Ascending aorta (tissue), 2 donors: ENCODE measurements at regions of chr12 and their contacts with region 1.

Region 1: DNA sequence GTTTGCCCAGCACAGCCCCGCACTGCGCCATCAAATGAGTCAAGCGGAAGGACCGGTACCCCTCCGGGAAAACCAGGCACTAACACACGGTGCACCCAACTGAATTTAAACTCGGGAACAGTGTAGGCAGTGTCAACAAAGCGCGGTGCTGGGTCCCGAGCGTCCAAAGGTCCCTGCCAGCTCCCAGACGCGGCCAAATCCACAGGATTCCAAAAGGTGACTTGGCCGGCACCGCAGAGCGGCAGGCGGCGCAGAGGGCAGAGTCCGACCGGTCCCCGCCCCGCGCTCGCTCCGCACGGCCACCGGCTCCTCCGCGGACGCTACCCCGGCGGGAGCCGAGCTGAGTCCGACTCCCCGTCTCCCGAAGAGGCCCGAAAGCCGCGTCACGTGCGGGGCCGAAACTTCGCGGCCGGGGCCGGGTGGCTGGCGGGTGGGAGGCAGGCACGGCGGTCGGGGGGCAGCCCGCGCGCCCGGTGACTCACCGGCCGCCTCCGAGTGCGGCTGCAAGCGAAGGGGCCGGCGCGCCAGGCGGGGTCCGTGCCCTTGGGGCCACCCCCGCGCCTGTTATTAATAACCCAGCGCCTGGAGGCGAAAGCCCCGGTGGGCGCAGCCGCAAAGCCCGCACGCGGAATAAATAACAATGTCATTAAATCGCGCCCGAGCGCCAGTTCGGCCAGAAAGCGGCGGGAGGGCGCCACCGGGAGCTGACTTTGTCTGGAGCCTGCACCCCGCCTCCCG is 863 bp downstream of the DENND5B start:
- DNase-seq: peak; percentile 42 to 91
- H3K4me3 ChIP-seq: peak overlapping the region; percentile 78 to 95
- H3K27ac ChIP-seq: peak overlapping the region; percentile 95 to 96
- H3K4me1 ChIP-seq: peaks cover 0 to 11% of the 10 kb centered on the region in 2 donors
- H3K27me3 ChIP-seq: no peaks in the 10 kb centered on the region
- CTCF ChIP-seq: no peak

Region 2: GRCh38 chr12:30378307-30378706 is 1211.8 kb before region 1 on chr12:
- intact Hi-C with region 1: no loop called
- DNase-seq: no peak
- H3K4me3 ChIP-seq: no peak overlapping the region
- H3K27ac ChIP-seq: no peak overlapping the region
- H3K4me1 ChIP-seq: no peaks in the 10 kb centered on the region
- H3K27me3 ChIP-seq: no peaks in the 10 kb centered on the region
- CTCF ChIP-seq: no peak

Region 3: DNA sequence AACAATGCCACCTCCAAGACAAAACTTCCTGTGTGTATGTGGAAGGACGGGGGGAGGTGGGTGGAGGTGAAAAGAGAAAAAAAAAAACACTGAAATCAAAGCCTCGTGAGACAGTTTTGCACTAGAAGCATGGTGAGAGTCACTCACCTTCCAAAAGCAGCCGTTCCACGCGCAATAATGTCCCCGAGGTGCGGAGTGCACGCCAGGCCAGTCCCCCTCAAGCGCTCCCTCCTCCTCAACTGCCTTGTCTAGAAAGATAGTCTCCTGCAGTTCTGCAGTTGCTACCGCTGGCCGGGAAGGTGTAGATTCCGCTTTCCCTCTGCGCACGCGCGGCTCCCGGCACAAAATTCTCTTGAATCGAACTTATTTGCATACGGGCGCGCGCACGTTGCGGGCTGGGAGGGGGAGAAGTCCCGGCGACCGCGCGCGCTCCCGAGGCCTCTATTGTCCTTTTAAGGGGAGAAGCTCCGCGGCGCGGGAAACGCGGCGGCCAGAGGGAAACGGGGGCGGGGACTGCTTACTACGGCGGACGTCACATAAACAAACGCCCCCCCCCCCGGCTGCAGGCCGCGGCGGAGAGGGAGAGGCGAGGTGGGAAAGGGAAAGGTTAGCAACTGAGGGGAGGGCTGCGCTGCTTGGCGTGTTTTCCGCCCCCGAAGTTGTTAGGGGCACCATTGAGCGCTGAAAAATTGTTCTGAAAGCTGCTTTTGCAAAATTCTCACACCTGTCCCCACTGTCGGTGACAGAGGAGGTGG is 264.0 kb before region 1 on chr12 and contains the start of gene SINHCAF:
- intact Hi-C with region 1: loop called (anchors 2 kb)
- DNase-seq: peak; percentile 99 to 100
- H3K4me3 ChIP-seq: peak within 1 kb of the TSS; percentile 86 to 91
- H3K27ac ChIP-seq: peak within 1 kb of the TSS; percentile 81 to 84
- H3K4me1 ChIP-seq: no peaks in the 10 kb centered on the region
- H3K27me3 ChIP-seq: no peaks in the 10 kb centered on the region
- CTCF ChIP-seq: no peak
- total RNA-seq, gene SINHCAF: 10.9 TPM

Region 4: DNA sequence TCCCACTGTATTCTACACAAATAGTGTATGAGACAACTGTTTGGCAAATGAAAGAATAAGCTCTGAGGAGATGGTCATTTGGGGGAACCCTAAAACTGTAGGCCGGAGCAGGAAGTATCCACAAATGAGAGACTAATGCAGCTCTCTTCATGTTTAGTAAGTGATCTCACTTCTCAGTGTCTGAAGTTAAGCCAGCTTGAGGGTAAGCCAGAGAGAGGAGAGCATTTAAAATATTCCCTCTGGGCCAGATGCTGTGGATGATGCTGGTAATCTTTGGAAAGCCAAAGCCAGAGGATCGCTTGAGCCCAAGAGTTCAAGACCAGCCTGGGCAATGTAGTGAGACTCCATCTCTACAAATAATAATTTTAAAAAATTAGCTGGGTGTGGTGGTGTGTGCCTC is 133.5 kb before region 1 on chr12:
- intact Hi-C with region 1: loop called (anchors 2 kb)
- DNase-seq: no peak
- H3K4me3 ChIP-seq: no peak overlapping the region
- H3K27ac ChIP-seq: peak overlapping the region; percentile 39 to 44
- H3K4me1 ChIP-seq: peaks cover 0 to 4% of the 10 kb centered on the region in 2 donors
- H3K27me3 ChIP-seq: no peaks in the 10 kb centered on the region
- CTCF ChIP-seq: no peak

Region 5: GRCh38 chr12:31496257-31496656 is 93.8 kb before region 1 on chr12:
- intact Hi-C with region 1: loop called (anchors 5 kb)
- DNase-seq: no peak
- H3K4me3 ChIP-seq: no peak overlapping the region
- H3K27ac ChIP-seq: peak overlapping the region; percentile 3 to 34
- H3K4me1 ChIP-seq: peaks cover 4 to 26% of the 10 kb centered on the region in 2 donors
- H3K27me3 ChIP-seq: no peaks in the 10 kb centered on the region
- CTCF ChIP-seq: no peak

Region 6: GRCh38 chr12:31518680-31519227 is 71.3 kb before region 1 on chr12:
- intact Hi-C with region 1: loop called (anchors 5 kb)
- DNase-seq: peak in 1 of 2 donors; percentile 83
- H3K4me3 ChIP-seq: peak overlapping the region in 1 of 2 donors; percentile 2
- H3K27ac ChIP-seq: peak overlapping the region; percentile 59 to 64
- H3K4me1 ChIP-seq: peaks cover 0 to 34% of the 10 kb centered on the region in 2 donors
- H3K27me3 ChIP-seq: no peaks in the 10 kb centered on the region
- CTCF ChIP-seq: no peak

Region 7: GRCh38 chr12:31631784-31632183 is 41.7 kb after region 1 on chr12:
- intact Hi-C with region 1: loop called (anchors 2 kb)
- DNase-seq: no peak
- H3K4me3 ChIP-seq: no peak overlapping the region
- H3K27ac ChIP-seq: no peak overlapping the region
- H3K4me1 ChIP-seq: peaks cover 0 to 6% of the 10 kb centered on the region in 2 donors
- H3K27me3 ChIP-seq: no peaks in the 10 kb centered on the region
- CTCF ChIP-seq: no peak

Region 8: DNA sequence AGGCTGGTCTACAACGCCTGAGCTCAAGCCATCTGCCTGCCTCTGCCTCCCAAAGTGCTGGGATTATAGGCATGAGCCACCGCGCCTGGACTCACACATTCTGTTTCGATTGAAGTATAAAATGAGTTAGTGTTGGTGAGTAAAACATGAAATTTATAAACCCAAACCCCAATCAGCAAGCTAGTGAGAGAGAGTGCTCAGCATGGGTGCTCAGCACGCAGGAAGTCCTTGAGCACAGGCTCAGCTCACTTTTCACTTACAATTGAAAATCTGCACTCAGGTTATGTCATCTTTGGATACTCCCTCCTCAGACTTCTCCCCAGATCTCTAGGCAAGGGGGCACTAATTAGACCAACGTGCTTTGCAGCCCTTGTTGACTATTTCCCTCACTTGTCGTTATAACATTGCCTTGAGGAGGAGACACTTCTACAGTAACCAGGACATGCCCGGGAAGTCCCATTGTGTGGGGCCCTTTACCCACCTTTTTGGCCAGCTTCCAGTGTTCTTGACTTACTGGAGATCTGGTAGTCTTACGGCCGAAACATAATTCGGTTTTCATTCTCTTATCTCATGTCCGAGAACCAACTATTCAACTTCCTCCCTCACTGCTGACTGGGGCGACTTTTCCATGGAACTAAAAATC is 207.3 kb after region 1 on chr12:
- intact Hi-C with region 1: no loop called
- DNase-seq: no peak
- H3K4me3 ChIP-seq: no peak overlapping the region
- H3K27ac ChIP-seq: no peak overlapping the region
- H3K4me1 ChIP-seq: no peaks in the 10 kb centered on the region
- H3K27me3 ChIP-seq: no peaks in the 10 kb centered on the region
- CTCF ChIP-seq: no peak